ENCODE measurements at regions of chr2 and their contacts with region 1.

Region 1: DNA sequence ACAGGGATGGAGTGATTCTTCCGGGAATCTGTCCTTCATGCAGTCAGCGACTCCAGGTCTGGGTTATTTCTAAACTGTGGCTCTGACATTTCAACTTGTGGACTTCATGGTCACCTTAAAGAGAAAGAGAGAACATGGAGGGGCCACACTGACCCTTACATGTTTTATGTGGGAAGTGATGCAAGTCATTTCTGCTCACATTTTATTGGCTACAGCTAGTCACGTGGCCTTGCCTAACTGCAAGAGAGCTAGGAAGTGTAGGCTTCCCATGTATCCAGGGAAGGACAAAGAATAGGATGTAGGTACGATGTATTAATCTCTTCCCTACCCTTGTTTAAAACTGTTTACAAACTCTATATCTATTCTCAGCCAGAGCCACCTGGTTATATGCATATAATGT is 30.3 kb upstream of the AFTPH start:
- DNase-seq: no peak
- ATAC-seq: no peak
- H3K4me3 Mint-ChIP-seq: no peak overlapping the region
- H3K27ac Mint-ChIP-seq: no peak overlapping the region
- H3K4me1 Mint-ChIP-seq: peaks cover 2 to 8% (median 4%) of the 10 kb centered on the region in 4 donors
- H3K27me3 Mint-ChIP-seq: peaks cover 0 to 10% (median 2%) of the 10 kb centered on the region in 5 donors

Region 2: GRCh38 chr2:65320946-65321345 is 827.2 kb after region 1 on chr2:
- POLR2A ChIA-PET with region 1: interaction called, 11 read pairs
- DNase-seq: no peak
- ATAC-seq: no peak
- H3K4me3 Mint-ChIP-seq: no peak overlapping the region
- H3K27ac Mint-ChIP-seq: no peak overlapping the region
- H3K4me1 Mint-ChIP-seq: peaks cover 0 to 3% (median under 1%) of the 10 kb centered on the region in 4 donors
- H3K27me3 Mint-ChIP-seq: peaks cover 0 to 2% (median 0%) of the 10 kb centered on the region in 5 donors

Measured in naive thymus-derived CD8-positive, alpha-beta T cell (primary cell).